Mammary epithelial cell (primary cell): ENCODE measurements at regions of chr9 and their contacts with region 1.

Region 1: GRCh38 chr9:116390306-116391228 is 237.0 kb downstream of the PAPPA start:
- DNase-seq: no peak
- H3K4me3 ChIP-seq: no peak overlapping the region
- H3K27ac ChIP-seq: no peak overlapping the region
- H3K4me1 ChIP-seq: peaks cover 15% of the 10 kb centered on the region
- H3K27me3 ChIP-seq: no peaks in the 10 kb centered on the region
- CTCF ChIP-seq: no peak

Region 2: DNA sequence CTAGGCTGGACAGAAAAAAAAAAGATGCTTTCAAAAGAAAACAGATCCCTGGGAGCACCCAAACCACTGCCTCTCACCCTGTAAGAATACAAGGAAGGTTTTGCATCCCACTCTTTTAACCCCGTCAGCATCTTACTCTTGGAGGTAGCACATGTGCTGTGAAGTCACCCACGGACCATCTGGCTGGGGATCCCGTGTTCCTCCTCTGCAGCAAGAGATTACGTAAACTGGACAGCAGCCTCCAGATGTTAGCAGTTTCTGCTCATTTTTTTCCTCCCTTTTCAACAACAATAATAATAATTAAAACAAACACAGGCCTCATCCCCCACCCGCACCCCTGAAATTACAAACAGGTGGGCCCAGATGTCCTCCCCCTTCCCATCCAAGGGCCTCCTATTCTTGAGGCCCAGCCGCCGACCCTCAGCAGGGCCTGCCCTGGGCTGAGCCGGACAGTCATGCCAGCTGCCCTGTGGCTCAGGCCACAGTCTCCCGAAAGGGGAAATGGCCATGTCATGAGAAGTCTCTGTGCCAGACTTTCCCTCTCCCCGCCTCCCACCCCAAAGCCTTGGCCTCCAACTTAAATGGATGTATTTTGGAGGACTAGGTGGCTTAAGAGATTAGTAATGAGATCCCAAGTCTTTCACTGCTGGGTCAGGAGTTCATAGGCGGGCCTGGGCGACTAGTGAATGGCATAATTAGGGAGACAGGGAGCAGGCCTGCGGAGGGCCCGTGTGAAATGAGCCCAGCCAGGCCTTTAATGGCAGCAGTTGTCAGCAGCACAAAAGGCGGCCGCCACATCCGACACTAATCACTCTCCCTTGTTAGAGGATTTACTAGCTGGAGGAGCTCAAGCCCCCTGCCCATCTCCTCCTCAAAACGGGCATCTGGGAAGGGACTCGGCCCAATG is 71.8 kb before region 1 on chr9:
- CTCF ChIA-PET with region 1: no interaction called
- dilution Hi-C with region 1: no loop called
- in situ Hi-C with region 1: no loop called
- intact Hi-C with region 1: no loop called
- DNase-seq: no peak
- H3K4me3 ChIP-seq: no peak overlapping the region
- H3K27ac ChIP-seq: no peak overlapping the region
- H3K4me1 ChIP-seq: no peaks in the 10 kb centered on the region
- H3K27me3 ChIP-seq: no peaks in the 10 kb centered on the region
- CTCF ChIP-seq: no peak

Region 3: DNA sequence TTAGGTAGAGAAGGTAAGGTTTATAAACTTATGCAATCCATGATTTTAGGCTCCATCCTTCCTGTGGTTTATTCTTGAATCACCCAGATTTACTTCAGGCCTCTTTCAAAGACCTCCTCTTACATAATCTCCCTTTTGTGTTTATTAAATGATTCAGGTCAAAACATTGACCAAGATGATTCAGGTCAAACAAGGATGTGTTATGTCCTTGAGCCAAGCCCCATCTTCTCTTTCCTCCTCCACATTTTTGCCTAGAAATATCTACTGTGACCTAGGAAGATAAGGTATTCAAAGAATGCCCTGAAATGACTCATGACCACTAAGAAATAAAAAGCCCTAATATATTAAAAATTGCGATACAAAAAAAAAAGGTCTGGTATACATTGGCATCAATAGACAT is 1281.8 kb after region 1 on chr9:
- CTCF ChIA-PET with region 1: no interaction called
- dilution Hi-C with region 1: no loop called
- in situ Hi-C with region 1: no loop called
- intact Hi-C with region 1: loop called (anchors 10 kb)
- DNase-seq: peak; percentile 83
- H3K4me3 ChIP-seq: no peak overlapping the region
- H3K27ac ChIP-seq: peak overlapping the region; percentile 53
- H3K4me1 ChIP-seq: peaks cover 27% of the 10 kb centered on the region
- H3K27me3 ChIP-seq: no peaks in the 10 kb centered on the region
- CTCF ChIP-seq: no peak